Stomach (tissue), 19 donors: ENCODE measurements at regions of chr16 and their contacts with region 1.

Region 1: DNA sequence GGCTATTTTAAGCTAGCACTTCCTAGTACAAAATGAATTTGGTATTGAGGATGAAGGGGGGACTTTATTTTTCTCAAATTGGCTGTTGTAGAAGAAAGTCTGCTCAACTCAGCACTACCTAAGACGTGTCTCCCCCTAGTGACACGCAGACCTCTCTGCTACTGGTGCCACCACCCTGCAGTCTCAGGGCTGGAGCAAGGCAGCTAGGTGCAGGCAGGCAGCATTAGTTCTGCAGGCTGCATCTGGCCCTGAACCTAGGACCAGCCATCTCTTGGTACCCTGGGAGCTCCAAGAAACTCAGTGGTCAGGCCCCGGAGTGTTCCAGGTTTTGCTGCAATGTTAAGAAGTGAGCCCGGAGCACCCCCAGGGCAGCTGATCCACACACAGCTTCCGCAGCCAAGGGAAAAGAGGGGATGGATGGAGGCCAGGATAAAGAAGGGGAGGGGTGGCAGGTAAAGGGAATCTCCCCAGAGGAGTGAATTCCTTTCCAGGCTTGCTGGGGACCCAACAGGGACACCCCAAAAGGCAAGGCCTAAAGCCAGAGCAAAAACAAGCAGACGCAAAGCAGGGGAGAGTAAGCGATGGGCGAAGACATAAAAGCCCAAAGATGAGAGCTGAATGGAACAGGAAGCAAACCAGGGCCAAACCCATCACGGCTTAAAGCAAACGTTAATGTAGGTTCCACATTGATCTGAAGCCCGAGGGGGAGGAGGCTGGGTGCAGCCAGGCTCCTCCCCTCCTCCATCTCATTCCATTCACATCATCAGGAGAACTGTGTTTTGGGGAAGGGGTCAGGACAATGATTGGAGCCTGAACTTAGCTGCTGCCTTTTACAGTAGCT is 200.5 kb downstream of the ZFHX3 start:
- DNase-seq: peak in 1 of 2 donors; percentile 71
- H3K4me3 ChIP-seq: no peak overlapping the region
- H3K27ac ChIP-seq: peak overlapping the region in 4 of 5 donors; percentile 65 to 84 (median 79)
- H3K4me1 ChIP-seq: peaks cover 12 to 60% (median 40%) of the 10 kb centered on the region in 4 donors
- H3K27me3 ChIP-seq: no peaks in the 10 kb centered on the region
- CTCF ChIP-seq: peak in 2 of 7 experiments; percentile 21 to 31
- EP300 ChIP-seq: no peak
- POLR2A ChIP-seq: no peak

Region 2: GRCh38 chr16:72604375-72604774 is 243.0 kb before region 1 on chr16:
- intact Hi-C with region 1: no loop called
- DNase-seq: no peak
- H3K4me3 ChIP-seq: no peak overlapping the region
- H3K27ac ChIP-seq: no peak overlapping the region
- H3K4me1 ChIP-seq: no peaks in the 10 kb centered on the region
- H3K27me3 ChIP-seq: no peaks in the 10 kb centered on the region
- CTCF ChIP-seq: no peak
- EP300 ChIP-seq: no peak
- POLR2A ChIP-seq: no peak

Region 3: DNA sequence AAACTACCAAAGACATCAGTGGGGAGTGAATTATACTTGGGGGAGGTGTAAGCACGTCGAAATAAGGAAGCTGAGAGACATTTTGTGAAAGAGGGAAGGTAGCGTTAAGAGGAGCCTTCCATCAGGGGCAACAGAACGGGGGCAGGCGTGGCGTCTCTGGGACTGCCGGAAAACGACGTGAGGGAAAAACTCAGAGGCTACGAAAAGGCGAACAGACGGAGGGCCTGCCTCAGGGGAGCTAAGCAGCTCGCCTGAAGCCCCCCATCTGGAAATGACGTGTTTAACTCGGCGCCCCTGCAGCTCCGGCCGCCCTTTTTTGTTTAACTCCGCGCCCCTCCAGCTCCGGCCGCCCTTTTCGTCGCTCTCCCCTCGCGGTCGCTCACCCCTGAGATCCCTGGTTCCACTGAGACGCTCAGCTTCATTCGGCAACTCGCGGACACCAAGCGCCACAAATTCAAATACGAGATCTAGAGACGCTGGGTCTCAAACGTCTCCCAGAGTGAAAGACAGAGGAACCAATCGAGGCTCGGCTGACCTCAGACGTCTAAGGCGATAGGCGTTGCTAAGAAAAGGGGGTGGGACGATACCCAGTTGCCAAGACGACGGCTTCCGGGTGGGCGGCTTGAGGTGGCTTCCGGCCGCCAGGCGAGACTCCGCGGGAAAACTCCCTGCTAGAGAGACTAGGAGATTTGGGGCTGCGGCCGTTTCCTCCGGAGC is 182.7 kb before region 1 on chr16:
- intact Hi-C with region 1: no loop called
- DNase-seq: peak; percentile 96 to 100
- H3K4me3 ChIP-seq: peak overlapping the region; percentile 77 to 98 (median 82)
- H3K27ac ChIP-seq: peak overlapping the region; percentile 11 to 86 (median 69)
- H3K4me1 ChIP-seq: peaks cover 7 to 19% (median 14%) of the 10 kb centered on the region in 4 donors
- H3K27me3 ChIP-seq: no peaks in the 10 kb centered on the region
- CTCF ChIP-seq: no peak
- EP300 ChIP-seq: no peak
- POLR2A ChIP-seq: no peak

Region 4: GRCh38 chr16:73047518-73048291 is 200.3 kb after region 1 on chr16 and contains the start of gene ZFHX3:
- intact Hi-C with region 1: loop called (anchors 10 kb)
- DNase-seq: peak; percentile 79 to 91
- H3K4me3 ChIP-seq: peak within 1 kb of the TSS; percentile 74 to 80 (median 77)
- H3K27ac ChIP-seq: peak within 1 kb of the TSS; percentile 91 to 98 (median 96)
- H3K4me1 ChIP-seq: peaks cover 22 to 92% (median 64%) of the 10 kb centered on the region in 4 donors
- H3K27me3 ChIP-seq: peaks cover 0 to 18% (median 0%) of the 10 kb centered on the region in 3 donors
- CTCF ChIP-seq: peak in 1 of 7 experiments; percentile 24
- EP300 ChIP-seq: no peak
- POLR2A ChIP-seq: no peak
- total RNA-seq, gene ZFHX3: 11.7 to 27.5 (median 13.6) TPM